CD4-positive, alpha-beta T cell (primary cell): ENCODE measurements at regions of chr1 and their contacts with region 1.

Region 1: GRCh38 chr1:97875996-97876395 is 44.8 kb downstream of the DPYD start:
- DNase-seq: no peak
- ATAC-seq: no peak
- H3K4me3 ChIP-seq: no peak overlapping the region
- H3K4me3 Mint-ChIP-seq: no peak overlapping the region
- H3K27ac ChIP-seq: no peak overlapping the region
- H3K27ac Mint-ChIP-seq: no peak overlapping the region
- H3K4me1 ChIP-seq: no peaks in the 10 kb centered on the region
- H3K4me1 Mint-ChIP-seq: peaks cover 18% of the 10 kb centered on the region
- H3K27me3 ChIP-seq: no peaks in the 10 kb centered on the region
- H3K27me3 Mint-ChIP-seq: no peaks in the 10 kb centered on the region
- CTCF ChIP-seq: no peak

Region 2: GRCh38 chr1:97864615-97865014 is 11.4 kb before region 1 on chr1:
- CTCF ChIA-PET with region 1: no interaction called
- POLR2A ChIA-PET with region 1: no interaction called
- intact Hi-C with region 1: loop called in 1 of 2 experiments (anchors 2 kb)
- DNase-seq: no peak
- ATAC-seq: no peak
- H3K4me3 ChIP-seq: no peak overlapping the region
- H3K4me3 Mint-ChIP-seq: no peak overlapping the region
- H3K27ac ChIP-seq: no peak overlapping the region
- H3K27ac Mint-ChIP-seq: no peak overlapping the region
- H3K4me1 ChIP-seq: no peaks in the 10 kb centered on the region
- H3K4me1 Mint-ChIP-seq: peaks cover 37% of the 10 kb centered on the region
- H3K27me3 ChIP-seq: no peaks in the 10 kb centered on the region
- H3K27me3 Mint-ChIP-seq: no peaks in the 10 kb centered on the region
- CTCF ChIP-seq: no peak

Region 3: DNA sequence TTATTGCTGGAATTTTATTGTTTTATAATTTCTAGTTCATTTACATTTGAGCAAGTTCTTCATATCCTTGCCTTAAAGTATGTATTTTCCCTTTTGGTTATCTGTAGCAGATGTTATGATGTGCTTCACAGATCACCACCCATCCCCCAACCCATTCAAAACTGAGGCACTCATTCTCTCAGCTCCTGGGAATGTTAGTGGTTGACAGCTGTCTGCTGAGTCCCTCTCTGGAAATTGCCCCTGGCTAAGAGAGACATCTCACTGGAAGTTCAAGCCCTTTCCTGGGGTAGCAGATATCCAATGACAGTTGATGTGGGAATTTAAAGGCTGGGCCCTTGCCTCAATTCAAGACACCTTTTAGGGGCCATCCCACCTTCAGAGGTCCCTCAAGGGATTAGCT is 49.2 kb after region 1 on chr1:
- CTCF ChIA-PET with region 1: no interaction called
- POLR2A ChIA-PET with region 1: no interaction called
- intact Hi-C with region 1: no loop called
- DNase-seq: no peak
- ATAC-seq: no peak
- H3K4me3 ChIP-seq: no peak overlapping the region
- H3K4me3 Mint-ChIP-seq: no peak overlapping the region
- H3K27ac ChIP-seq: no peak overlapping the region
- H3K27ac Mint-ChIP-seq: no peak overlapping the region
- H3K4me1 ChIP-seq: peaks cover 6% of the 10 kb centered on the region
- H3K4me1 Mint-ChIP-seq: peaks cover 22% of the 10 kb centered on the region
- H3K27me3 ChIP-seq: no peaks in the 10 kb centered on the region
- H3K27me3 Mint-ChIP-seq: no peaks in the 10 kb centered on the region
- CTCF ChIP-seq: no peak

Region 4: GRCh38 chr1:98078596-98078995 is 202.6 kb after region 1 on chr1:
- CTCF ChIA-PET with region 1: no interaction called
- POLR2A ChIA-PET with region 1: no interaction called
- intact Hi-C with region 1: no loop called
- DNase-seq: no peak
- ATAC-seq: no peak
- H3K4me3 ChIP-seq: no peak overlapping the region
- H3K4me3 Mint-ChIP-seq: no peak overlapping the region
- H3K27ac ChIP-seq: no peak overlapping the region
- H3K27ac Mint-ChIP-seq: no peak overlapping the region
- H3K4me1 ChIP-seq: no peaks in the 10 kb centered on the region
- H3K4me1 Mint-ChIP-seq: no peaks in the 10 kb centered on the region
- H3K27me3 ChIP-seq: no peaks in the 10 kb centered on the region
- H3K27me3 Mint-ChIP-seq: no peaks in the 10 kb centered on the region
- CTCF ChIP-seq: no peak